ENCODE measurements at regions of chr1 and their contacts with region 1.

Region 1: GRCh38 chr1:53001128-53001527 is 60.9 kb upstream of the PODN start:
- DNase-seq: no peak
- H3K4me3 ChIP-seq: no peak overlapping the region
- H3K27ac ChIP-seq: no peak overlapping the region
- H3K4me1 ChIP-seq: no peaks in the 10 kb centered on the region
- CTCF ChIP-seq: no peak

Region 2: GRCh38 chr1:52927212-52928014 is 73.7 kb before region 1 on chr1 and contains the start of gene SCP2:
- CTCF ChIA-PET with region 1: no interaction called
- POLR2A ChIA-PET with region 1: no interaction called
- intact Hi-C with region 1: no loop called
- DNase-seq: no peak
- H3K4me3 ChIP-seq: no peak within 1 kb of the TSS
- H3K27ac ChIP-seq: no peak within 1 kb of the TSS
- H3K4me1 ChIP-seq: no peaks in the 10 kb centered on the region
- CTCF ChIP-seq: no peak
- total RNA-seq, gene SCP2: 63.9 and 65.6 TPM in 2 replicates

Region 3: DNA sequence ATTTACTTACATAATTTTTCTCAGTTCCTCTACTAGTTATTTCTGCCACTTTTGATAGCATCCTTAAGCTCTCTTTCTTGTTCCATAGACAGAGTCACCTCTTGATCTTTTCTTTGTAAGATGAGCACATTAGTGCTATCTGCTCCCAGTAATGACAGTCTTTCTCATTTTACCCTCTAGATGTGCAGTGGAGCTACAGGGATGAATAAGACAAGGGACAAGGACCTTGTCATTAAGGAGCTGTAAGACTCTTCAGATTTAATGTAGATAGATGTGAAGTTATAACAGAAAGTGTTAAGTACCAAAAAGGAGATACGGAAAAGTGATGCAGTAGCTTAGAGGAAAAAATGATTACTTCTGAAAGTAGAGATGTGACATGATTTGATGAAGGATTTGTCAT is 53.6 kb before region 1 on chr1:
- CTCF ChIA-PET with region 1: no interaction called
- POLR2A ChIA-PET with region 1: interaction called, 10 read pairs
- intact Hi-C with region 1: no loop called
- DNase-seq: no peak
- H3K4me3 ChIP-seq: no peak overlapping the region
- H3K27ac ChIP-seq: no peak overlapping the region
- H3K4me1 ChIP-seq: no peaks in the 10 kb centered on the region
- CTCF ChIP-seq: no peak

Region 4: DNA sequence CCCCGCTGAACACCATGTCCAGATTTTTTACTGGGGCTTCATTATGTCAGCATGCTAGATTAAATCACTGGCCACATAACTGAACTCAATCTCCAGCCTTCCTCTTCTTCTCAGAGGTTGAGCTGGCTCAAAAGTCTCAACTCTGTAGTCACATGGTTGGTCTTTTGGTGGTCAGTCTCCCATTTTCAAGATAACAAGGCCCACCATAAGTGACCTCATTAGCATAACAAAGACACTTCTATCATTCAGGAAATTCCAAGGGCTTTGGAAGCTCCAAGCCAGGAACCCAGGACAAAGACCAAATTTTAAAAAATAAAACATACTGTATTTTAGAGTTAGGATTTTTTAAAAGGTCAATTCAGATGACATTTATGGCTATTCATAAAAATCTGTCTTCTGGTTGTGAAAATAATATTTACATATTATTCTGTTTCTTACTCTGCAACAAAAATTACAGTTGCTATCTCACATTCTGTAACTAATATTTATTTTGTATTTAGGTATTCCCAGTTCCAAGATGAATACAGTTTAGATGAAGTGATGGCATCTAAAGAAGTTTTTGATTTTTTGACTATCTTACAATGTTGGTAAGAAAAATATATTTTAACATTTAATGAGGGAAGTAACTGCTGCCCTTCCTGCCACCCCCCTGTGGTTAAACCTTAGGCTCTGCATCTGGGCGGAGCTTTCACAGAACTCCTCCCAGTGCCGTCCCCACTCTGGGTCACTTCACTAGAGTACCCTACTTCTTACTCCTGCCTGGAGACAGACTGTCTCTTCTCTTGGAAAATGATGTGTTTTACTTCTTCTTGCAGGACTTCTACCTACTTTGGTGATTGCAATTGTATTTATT is 24.7 kb before region 1 on chr1:
- CTCF ChIA-PET with region 1: no interaction called
- POLR2A ChIA-PET with region 1: no interaction called
- intact Hi-C with region 1: no loop called
- DNase-seq: no peak
- H3K4me3 ChIP-seq: no peak overlapping the region
- H3K27ac ChIP-seq: no peak overlapping the region
- H3K4me1 ChIP-seq: no peaks in the 10 kb centered on the region
- CTCF ChIP-seq: no peak

Measured in OCI-LY7 (cell line).